Vagina (tissue), 2 donors: ENCODE measurements at regions of chr15 and their contacts with region 1.

Region 1: DNA sequence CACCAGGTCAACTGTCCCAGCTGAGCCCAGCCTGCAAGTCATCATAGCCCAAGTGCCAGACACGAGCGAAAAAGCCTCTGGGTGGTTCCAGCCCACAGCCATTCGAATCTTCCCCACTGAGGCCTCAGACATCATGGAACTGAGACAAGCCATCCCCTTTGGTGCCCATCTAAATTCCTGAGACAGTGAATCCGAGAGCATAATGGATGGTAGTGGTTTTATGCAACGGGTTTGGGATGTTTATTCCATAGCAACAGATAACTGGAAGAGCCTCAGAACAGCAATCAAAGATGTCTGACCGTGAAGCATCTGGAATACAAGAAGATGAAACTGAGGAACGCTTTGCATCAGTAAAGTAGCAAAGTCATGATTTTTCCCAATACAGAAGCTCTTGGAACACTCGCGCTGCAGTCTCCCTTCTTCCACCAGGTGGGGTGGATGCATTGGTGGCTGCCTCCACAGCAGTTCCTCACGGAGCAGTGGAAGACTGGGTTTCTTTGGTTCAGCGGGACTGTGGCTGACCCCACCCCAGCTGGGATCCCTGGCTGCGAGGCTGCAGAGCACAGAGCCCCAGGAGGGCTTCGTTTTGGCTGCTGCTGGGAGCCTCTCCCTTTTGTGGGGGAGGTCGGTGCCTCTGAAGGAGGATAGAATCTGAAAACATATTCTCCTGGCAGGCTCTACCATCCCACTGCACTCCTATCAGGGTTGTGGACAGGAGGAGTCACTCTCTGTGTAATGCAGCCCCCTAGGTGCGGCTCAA is 26.4 kb upstream of the PDE8A start:
- DNase-seq: no peak
- H3K4me3 ChIP-seq: peak overlapping the region; percentile 20 to 30
- H3K27ac ChIP-seq: no peak overlapping the region
- H3K4me1 ChIP-seq: peaks cover 11% of the 10 kb centered on the region
- H3K27me3 ChIP-seq: no peaks in the 10 kb centered on the region
- CTCF ChIP-seq: peak; percentile 67 to 82 (median 68)
- POLR2A ChIP-seq: no peak

Region 2: DNA sequence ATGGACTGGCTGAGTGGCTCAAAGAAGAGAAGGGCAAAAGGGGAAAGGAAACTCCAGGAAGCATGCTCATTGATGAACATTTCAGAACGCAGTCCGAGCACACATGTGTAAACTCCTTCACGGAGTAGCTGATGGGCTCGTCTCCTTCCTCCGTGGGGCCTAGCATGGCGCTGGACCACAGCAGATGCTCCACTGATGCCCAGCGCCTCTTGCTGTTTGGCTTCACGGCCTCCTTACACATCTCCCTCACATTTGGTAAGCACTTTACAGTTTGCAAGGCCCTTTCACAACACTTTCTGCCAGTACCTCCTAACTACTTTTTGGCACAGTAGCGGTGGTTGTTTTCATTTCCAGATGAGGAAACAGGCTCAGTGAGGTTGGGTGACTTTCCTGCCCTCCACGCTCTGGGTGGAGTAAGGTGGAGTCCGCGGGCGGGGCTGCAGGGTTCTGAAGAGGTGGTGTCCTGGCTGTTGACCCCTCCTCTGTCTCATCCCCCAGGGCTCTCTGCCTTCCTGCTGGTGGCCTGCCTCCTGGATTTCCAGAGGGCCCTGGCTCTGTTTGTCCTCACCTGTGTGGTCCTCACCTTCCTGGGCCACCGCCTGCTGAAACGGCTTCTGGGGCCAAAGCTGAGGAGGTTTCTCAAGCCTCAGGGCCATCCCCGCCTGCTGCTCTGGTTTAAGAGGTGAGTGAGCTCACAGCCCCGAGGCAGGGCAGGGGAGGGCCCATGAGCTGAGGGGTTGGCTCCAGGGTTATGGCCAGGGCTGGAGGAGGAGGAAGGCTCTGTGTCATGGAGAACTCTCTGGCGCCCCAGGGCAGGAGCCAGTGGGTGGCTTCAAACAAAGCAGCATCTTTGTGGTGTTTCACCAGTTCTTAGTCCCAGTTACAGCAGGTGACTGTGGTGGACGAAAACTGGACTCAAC is 60.6 kb before region 1 on chr15:
- intact Hi-C with region 1: no loop called
- DNase-seq: no peak
- H3K4me3 ChIP-seq: no peak overlapping the region
- H3K27ac ChIP-seq: no peak overlapping the region
- H3K4me1 ChIP-seq: no peaks in the 10 kb centered on the region
- H3K27me3 ChIP-seq: no peaks in the 10 kb centered on the region
- CTCF ChIP-seq: no peak
- POLR2A ChIP-seq: no peak

Region 3: DNA sequence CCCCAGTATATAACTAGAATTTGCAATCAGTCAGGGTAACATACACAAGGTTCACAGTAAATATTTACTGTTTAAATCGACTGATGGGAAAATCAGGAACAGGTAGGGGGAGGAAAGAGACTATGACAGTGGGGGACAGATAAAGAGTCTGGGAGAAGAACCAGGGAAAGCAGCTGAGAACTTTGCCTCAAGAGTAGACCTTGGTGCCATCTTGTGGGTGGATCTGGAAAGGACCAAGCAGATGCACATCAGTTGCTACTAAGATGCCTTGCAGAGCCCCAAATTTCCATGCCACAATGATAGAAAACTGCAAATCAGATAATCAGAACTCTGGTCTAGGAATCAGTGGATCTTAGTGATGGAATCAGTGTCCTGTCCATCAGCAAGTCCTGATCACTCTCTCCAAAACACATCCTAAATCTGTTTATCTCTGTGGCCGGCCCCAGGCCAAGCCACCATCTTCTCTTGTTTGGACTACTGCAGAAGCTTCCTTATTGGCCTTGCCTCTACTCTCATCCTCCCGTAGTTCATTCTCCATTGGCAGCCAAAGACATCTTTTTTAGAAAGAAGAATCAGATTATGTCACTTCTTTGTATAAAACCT is 89.1 kb after region 1 on chr15:
- intact Hi-C with region 1: loop called (anchors 2 kb)
- DNase-seq: no peak
- H3K4me3 ChIP-seq: no peak overlapping the region
- H3K27ac ChIP-seq: no peak overlapping the region
- H3K4me1 ChIP-seq: peaks cover 8% of the 10 kb centered on the region
- H3K27me3 ChIP-seq: no peaks in the 10 kb centered on the region
- CTCF ChIP-seq: peak; percentile 57 to 74 (median 67)
- POLR2A ChIP-seq: no peak